CD4-positive, alpha-beta T cell (primary cell): ENCODE measurements at regions of chr2 and their contacts with region 1.

Region 1: GRCh38 chr2:26345545-26346453 is at the start of gene SELENOI:
- DNase-seq: peak; percentile 98 to 100 (median 99)
- ATAC-seq: peak; percentile 93
- H3K4me3 ChIP-seq: peak within 1 kb of the TSS; percentile 96
- H3K4me3 Mint-ChIP-seq: peak within 1 kb of the TSS; percentile 97
- H3K27ac ChIP-seq: peak within 1 kb of the TSS; percentile 92 to 96
- H3K27ac Mint-ChIP-seq: peak within 1 kb of the TSS; percentile 97
- H3K4me1 ChIP-seq: peaks cover 20% of the 10 kb centered on the region
- H3K4me1 Mint-ChIP-seq: peaks cover 43% of the 10 kb centered on the region
- H3K27me3 ChIP-seq: no peaks in the 10 kb centered on the region
- H3K27me3 Mint-ChIP-seq: no peaks in the 10 kb centered on the region
- CTCF ChIP-seq: no peak
- total RNA-seq, gene SELENOI: 27.7 to 31.5 TPM

Region 2: GRCh38 chr2:25161055-25161781 is 1184.6 kb before region 1 on chr2:
- CTCF ChIA-PET with region 1: no interaction called
- POLR2A ChIA-PET with region 1: no interaction called
- intact Hi-C with region 1: loop called in 1 of 2 experiments (anchors 5 kb)
- DNase-seq: peak; percentile 40 to 87 (median 64)
- ATAC-seq: peak; percentile 75
- H3K4me3 ChIP-seq: peak overlapping the region; percentile 57
- H3K4me3 Mint-ChIP-seq: peak overlapping the region; percentile 60
- H3K27ac ChIP-seq: peak overlapping the region in 1 of 2 donors; percentile 59
- H3K27ac Mint-ChIP-seq: peak overlapping the region; percentile 84
- H3K4me1 ChIP-seq: peaks cover 24% of the 10 kb centered on the region
- H3K4me1 Mint-ChIP-seq: peaks cover 38% of the 10 kb centered on the region
- H3K27me3 ChIP-seq: peaks cover 0 to 2% of the 10 kb centered on the region in 2 experiments
- H3K27me3 Mint-ChIP-seq: peaks cover 5% of the 10 kb centered on the region
- CTCF ChIP-seq: no peak

Region 3: GRCh38 chr2:25991965-25992364 is 353.8 kb before region 1 on chr2:
- CTCF ChIA-PET with region 1: interaction called, 3 read pairs
- POLR2A ChIA-PET with region 1: interaction called, 4 read pairs
- intact Hi-C with region 1: loop called in 1 of 2 experiments (anchors 5 kb)
- DNase-seq: no peak
- ATAC-seq: peak; percentile 13
- H3K4me3 ChIP-seq: no peak overlapping the region
- H3K4me3 Mint-ChIP-seq: no peak overlapping the region
- H3K27ac ChIP-seq: no peak overlapping the region
- H3K27ac Mint-ChIP-seq: peak overlapping the region; percentile 1
- H3K4me1 ChIP-seq: peaks cover 9% of the 10 kb centered on the region
- H3K4me1 Mint-ChIP-seq: peaks cover 8% of the 10 kb centered on the region
- H3K27me3 ChIP-seq: no peaks in the 10 kb centered on the region
- H3K27me3 Mint-ChIP-seq: no peaks in the 10 kb centered on the region
- CTCF ChIP-seq: no peak

Region 4: GRCh38 chr2:26103752-26104151 is 242.0 kb before region 1 on chr2:
- CTCF ChIA-PET with region 1: no interaction called
- POLR2A ChIA-PET with region 1: no interaction called
- intact Hi-C with region 1: no loop called
- DNase-seq: no peak
- ATAC-seq: no peak
- H3K4me3 ChIP-seq: no peak overlapping the region
- H3K4me3 Mint-ChIP-seq: no peak overlapping the region
- H3K27ac ChIP-seq: no peak overlapping the region
- H3K27ac Mint-ChIP-seq: no peak overlapping the region
- H3K4me1 ChIP-seq: peaks cover 3% of the 10 kb centered on the region
- H3K4me1 Mint-ChIP-seq: peaks cover 29% of the 10 kb centered on the region
- H3K27me3 ChIP-seq: no peaks in the 10 kb centered on the region
- H3K27me3 Mint-ChIP-seq: no peaks in the 10 kb centered on the region
- CTCF ChIP-seq: no peak

Region 5: DNA sequence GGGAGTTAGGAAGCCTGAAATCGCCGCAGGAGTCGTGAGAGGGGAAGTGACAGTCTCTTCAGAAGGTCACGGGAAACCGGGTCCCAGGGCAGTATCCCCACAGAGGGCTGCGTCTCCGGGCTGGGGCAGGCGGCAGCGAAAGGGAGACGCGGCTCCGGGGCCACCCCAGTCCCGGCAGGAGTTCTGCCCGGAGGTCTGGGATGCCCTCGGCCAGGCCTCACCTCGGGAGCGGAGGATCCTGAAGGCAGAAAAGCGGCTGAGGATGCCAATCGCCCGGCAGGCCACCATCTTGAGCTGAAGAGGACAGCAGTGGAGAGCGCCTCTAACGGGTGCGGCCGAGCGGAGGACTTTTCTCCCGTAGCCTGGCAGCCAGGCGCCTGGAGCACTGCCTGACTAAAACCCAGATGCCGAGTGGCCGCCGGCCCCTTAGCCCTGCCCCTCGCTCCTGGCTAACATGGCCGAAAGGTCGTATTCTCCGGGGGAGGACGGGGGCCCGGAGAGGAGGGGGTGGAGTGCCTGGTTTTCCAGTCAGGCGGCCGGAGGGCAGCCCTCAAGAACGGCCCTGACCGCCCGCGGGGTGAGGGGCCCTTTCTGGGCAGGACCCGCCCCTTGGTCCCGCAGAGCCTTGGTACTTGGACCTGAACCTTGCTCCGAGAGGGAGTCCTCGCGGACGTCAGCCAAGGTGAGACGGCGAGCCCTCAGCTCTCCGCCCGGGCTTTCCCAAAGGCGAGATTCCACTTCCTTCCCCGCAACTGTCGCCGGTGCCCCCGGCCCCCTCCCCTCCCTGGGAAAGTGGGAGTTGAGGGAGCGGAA is 101.3 kb before region 1 on chr2 and contains the starts of genes HADHA and HADHB:
- CTCF ChIA-PET with region 1: no interaction called
- POLR2A ChIA-PET with region 1: interaction called, 28 read pairs
- intact Hi-C with region 1: loop called (anchors 2 to 5 kb)
- DNase-seq: peak; percentile 68 to 93 (median 80)
- ATAC-seq: peak; percentile 81
- H3K4me3 ChIP-seq: peak within 1 kb of the TSS; percentile 96
- H3K4me3 Mint-ChIP-seq: peak within 1 kb of the TSS; percentile 100
- H3K27ac ChIP-seq: peak within 1 kb of the TSS; percentile 95 to 98
- H3K27ac Mint-ChIP-seq: peak within 1 kb of the TSS; percentile 97
- H3K4me1 ChIP-seq: peaks cover 33% of the 10 kb centered on the region
- H3K4me1 Mint-ChIP-seq: peaks cover 76% of the 10 kb centered on the region
- H3K27me3 ChIP-seq: no peaks in the 10 kb centered on the region
- H3K27me3 Mint-ChIP-seq: no peaks in the 10 kb centered on the region
- CTCF ChIP-seq: no peak
- total RNA-seq, gene HADHA: 72.4 to 73.7 TPM
- total RNA-seq, gene HADHB: 25.2 to 30.3 TPM

Region 6: DNA sequence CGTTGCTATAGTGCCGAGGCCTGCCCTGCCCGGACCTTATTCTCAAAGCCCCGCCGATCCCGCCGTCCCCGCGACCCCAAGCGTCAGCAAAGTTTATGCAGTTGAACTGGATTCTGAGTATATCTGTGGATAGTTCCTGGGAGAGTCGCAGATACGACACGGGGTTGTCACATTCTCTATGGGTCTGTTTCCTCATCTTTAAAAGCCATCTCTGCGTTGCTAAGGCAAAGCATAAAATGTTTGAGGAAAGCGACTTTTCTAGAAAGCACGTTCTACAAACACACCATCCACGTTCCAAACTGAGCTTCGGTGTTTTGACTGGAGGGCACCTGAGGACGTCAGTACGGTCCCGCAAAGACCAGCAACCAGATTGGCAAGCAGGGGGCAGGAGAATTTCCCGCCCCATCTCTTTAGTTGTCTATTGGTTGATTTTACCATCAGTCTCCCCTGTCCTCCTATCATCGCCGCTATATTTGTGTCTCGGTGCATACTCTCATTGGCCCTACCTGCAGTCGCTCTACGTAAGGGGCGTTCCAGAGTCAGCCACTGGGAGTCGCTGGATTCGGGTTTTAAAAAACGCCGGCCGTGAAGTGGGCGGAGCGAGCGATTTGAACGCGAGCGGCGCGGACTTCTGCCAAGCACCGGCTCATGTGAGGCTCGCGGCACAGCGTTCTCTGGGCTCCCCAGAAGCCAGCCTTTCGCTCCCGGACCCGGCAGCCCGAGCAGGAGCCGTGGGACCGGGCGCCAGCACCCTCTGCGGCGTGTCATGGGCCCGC is 439.8 kb after region 1 on chr2 and contains the start of gene CENPA:
- CTCF ChIA-PET with region 1: no interaction called
- POLR2A ChIA-PET with region 1: no interaction called
- intact Hi-C with region 1: loop called in 1 of 2 experiments (anchors 10 kb)
- DNase-seq: peak; percentile 91 to 99 (median 93)
- ATAC-seq: peak; percentile 98
- H3K4me3 ChIP-seq: peak within 1 kb of the TSS; percentile 65
- H3K4me3 Mint-ChIP-seq: peak within 1 kb of the TSS; percentile 87
- H3K27ac ChIP-seq: peak within 1 kb of the TSS; percentile 23 to 34
- H3K27ac Mint-ChIP-seq: peak within 1 kb of the TSS; percentile 85
- H3K4me1 ChIP-seq: peaks cover 19% of the 10 kb centered on the region
- H3K4me1 Mint-ChIP-seq: peaks cover 11% of the 10 kb centered on the region
- H3K27me3 ChIP-seq: no peaks in the 10 kb centered on the region
- H3K27me3 Mint-ChIP-seq: peaks cover 26% of the 10 kb centered on the region
- CTCF ChIP-seq: peak; percentile 5
- total RNA-seq, gene CENPA: 1.0 to 1.1 TPM